Activated T-helper 1 cell treated with anti-CD3 and anti-CD28 coated beads, Interleukin-12 subunit alpha, Interleukin-12 subunit beta, Interleukin-2, Interleukin-4 antibody, amounts not matched to agents 30 ng/mL and 10 ng/mL and 1 ng/mL, durations not matched to agents 14 hours and 24 hours and 36 hours (primary cell): ENCODE measurements at regions of chr4 and their contacts with region 1.

Region 1: DNA sequence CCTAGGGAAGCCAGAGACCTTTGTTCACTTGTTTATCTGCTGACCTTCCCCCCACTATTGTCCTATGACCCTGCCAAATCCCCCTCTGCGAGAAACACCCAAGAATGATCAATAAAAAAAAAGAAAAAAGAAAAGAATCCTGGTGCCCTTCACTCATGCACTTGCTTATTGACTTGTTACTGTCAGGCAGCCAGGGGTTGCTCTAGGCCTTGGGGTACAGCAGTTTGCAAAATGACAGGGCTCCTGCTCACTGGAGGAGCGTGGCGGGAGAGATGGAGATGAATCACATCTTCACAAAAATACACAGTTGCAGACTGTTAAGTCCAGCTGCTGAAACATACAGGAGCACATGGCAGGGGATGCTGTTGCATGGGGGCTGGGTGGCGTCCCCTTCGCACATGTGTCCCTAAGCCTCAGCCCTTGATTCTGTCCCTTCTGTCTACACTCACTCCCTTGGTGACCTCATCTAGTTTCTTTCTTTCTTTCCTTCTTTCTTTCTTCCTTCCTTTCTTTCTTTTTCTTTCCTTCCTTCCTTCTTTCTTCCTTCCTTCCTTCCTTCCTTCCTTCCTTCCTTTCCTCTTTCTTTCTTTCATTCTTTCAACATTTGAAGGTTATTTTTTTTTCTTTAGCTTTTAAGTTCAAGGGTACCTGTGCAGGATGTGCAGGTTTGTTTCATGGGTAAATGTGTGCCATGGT is 16.9 kb upstream of the TMEM271 start:
- DNase-seq: no peak
- H3K4me3 Mint-ChIP-seq: no peak overlapping the region
- H3K27ac Mint-ChIP-seq: no peak overlapping the region
- H3K4me1 Mint-ChIP-seq: no peaks in the 10 kb centered on the region
- H3K27me3 Mint-ChIP-seq: peaks cover 3% of the 10 kb centered on the region

Region 2: GRCh38 chr4:961351-962230 is 368.6 kb after region 1 on chr4:
- intact Hi-C with region 1: loop called (anchors 5 kb)
- DNase-seq: no peak
- H3K4me3 Mint-ChIP-seq: no peak overlapping the region
- H3K27ac Mint-ChIP-seq: no peak overlapping the region
- H3K4me1 Mint-ChIP-seq: no peaks in the 10 kb centered on the region
- H3K27me3 Mint-ChIP-seq: no peaks in the 10 kb centered on the region